ENCODE measurements at regions of chr4 and their contacts with region 1.

Region 1: DNA sequence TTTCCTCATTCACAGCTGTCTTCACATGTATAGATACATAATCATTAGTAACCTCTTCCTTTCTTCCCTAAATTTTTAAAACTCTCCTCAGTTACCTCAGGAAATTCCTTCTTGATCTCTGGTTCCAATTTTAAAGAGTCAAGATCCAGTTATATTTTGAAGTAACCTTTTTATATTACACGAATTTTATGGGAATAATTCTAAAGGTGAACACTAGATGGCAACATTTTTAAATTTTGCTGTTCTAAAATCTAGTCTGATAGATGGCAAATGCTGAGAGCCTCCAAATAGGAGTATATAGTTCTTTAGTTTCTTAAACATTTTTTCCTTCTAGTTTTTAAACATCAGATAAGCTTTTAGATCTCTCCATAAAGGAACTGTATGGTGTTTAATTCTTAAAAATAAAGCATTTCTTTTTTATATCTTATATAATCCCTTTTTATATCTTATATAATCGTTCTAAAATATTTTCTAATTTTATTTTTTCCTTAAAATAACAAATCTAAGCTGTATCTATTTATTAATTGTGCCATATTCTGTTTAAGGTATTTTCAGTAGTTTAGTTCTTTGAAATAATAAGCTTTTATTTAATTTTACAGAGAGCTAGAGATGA is 37.9 kb upstream of the PAPSS1 start:
- DNase-seq: no peak
- H3K4me3 Mint-ChIP-seq: no peak overlapping the region
- H3K27ac Mint-ChIP-seq: no peak overlapping the region
- H3K4me1 Mint-ChIP-seq: no peaks in the 10 kb centered on the region
- H3K27me3 Mint-ChIP-seq: peaks cover 7% of the 10 kb centered on the region

Region 2: GRCh38 chr4:107838861-107839565 is 81.0 kb after region 1 on chr4:
- CTCF ChIA-PET with region 1: no interaction called
- POLR2A ChIA-PET with region 1: no interaction called
- DNase-seq: no peak
- H3K4me3 Mint-ChIP-seq: no peak overlapping the region
- H3K27ac Mint-ChIP-seq: no peak overlapping the region
- H3K4me1 Mint-ChIP-seq: no peaks in the 10 kb centered on the region
- H3K27me3 Mint-ChIP-seq: peaks cover 9% of the 10 kb centered on the region

Region 3: GRCh38 chr4:107908377-107908776 is 150.4 kb after region 1 on chr4:
- CTCF ChIA-PET with region 1: interaction called, 14 read pairs
- POLR2A ChIA-PET with region 1: no interaction called
- DNase-seq: no peak
- H3K4me3 Mint-ChIP-seq: no peak overlapping the region
- H3K27ac Mint-ChIP-seq: no peak overlapping the region
- H3K4me1 Mint-ChIP-seq: no peaks in the 10 kb centered on the region
- H3K27me3 Mint-ChIP-seq: peaks cover 2% of the 10 kb centered on the region

Region 4: GRCh38 chr4:107913281-107913899 is 155.4 kb after region 1 on chr4:
- CTCF ChIA-PET with region 1: interaction called, 14 read pairs
- POLR2A ChIA-PET with region 1: no interaction called
- DNase-seq: no peak
- H3K4me3 Mint-ChIP-seq: no peak overlapping the region
- H3K27ac Mint-ChIP-seq: no peak overlapping the region
- H3K4me1 Mint-ChIP-seq: no peaks in the 10 kb centered on the region
- H3K27me3 Mint-ChIP-seq: no peaks in the 10 kb centered on the region

Region 5: GRCh38 chr4:108224611-108225053 is 466.7 kb after region 1 on chr4:
- CTCF ChIA-PET with region 1: no interaction called
- POLR2A ChIA-PET with region 1: no interaction called
- DNase-seq: no peak
- H3K4me3 Mint-ChIP-seq: no peak overlapping the region
- H3K27ac Mint-ChIP-seq: no peak overlapping the region
- H3K4me1 Mint-ChIP-seq: no peaks in the 10 kb centered on the region
- H3K27me3 Mint-ChIP-seq: no peaks in the 10 kb centered on the region

Measured in activated CD4-positive, alpha-beta memory T cell treated with anti-CD3 and anti-CD28 coated beads, Interleukin-2, amount 10 ng/mL, durations not matched to agents 7 days and 5 days (primary cell).